Activated naive CD8-positive, alpha-beta T cell treated with anti-CD3 and anti-CD28 coated beads, Interleukin-2, amount 10 ng/mL, durations not matched to agents 7 days and 5 days (primary cell): ENCODE measurements at regions of chr2 and their contacts with region 1.

Region 1: DNA sequence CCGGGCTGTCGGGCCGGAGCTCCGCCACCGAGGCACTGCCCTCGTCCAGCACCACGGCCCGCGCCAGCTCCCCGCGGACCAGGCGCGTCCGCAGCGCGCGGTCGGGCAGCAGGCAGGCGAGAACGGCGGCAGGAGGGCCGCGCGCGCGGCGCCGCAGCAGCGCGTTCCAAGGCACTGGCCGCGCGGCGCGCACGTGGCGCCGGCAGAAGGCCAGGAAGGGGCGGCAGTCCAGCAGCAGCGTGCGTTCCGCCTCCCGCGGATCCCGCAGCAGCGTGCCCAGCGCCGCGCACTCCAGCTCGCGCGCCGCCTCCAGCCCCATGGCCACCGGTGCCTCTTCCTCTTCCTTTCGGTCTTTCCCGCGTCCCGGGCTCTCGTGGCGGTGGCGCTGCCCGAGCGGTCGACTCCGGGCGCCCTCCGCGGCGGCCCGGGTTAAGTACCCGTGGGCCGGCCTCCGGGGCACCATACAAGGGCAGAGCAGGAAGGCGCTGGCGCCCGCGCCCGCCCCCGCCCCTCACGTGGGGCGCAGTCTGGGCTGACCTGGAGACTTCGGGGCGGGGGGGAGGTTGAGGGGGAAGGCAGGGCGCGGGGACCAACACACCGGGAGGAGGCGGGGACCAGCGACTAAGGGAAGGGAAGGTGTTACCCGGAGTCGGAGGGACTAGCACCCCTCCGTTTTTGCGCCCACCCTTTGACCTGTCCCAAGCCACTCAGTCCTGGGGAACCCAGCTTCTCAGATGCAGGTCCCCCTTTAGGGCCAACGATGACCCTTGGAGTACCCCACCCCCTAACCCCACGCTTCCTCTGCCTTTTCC is at the start of gene DUSP2:
- DNase-seq: peak; percentile 89
- ATAC-seq: peak; percentile 68
- H3K4me3 Mint-ChIP-seq: peak within 1 kb of the TSS; percentile 93
- H3K27ac Mint-ChIP-seq: peak within 1 kb of the TSS; percentile 96
- H3K4me1 Mint-ChIP-seq: peaks cover 46% of the 10 kb centered on the region
- H3K27me3 Mint-ChIP-seq: no peaks in the 10 kb centered on the region
- total RNA-seq, gene DUSP2: 47.7 to 50.2 TPM

Region 2: GRCh38 chr2:96072746-96073145 is 72.5 kb before region 1 on chr2:
- POLR2A ChIA-PET with region 1: no interaction called
- DNase-seq: no peak
- ATAC-seq: no peak
- H3K4me3 Mint-ChIP-seq: no peak overlapping the region
- H3K27ac Mint-ChIP-seq: no peak overlapping the region
- H3K4me1 Mint-ChIP-seq: no peaks in the 10 kb centered on the region
- H3K27me3 Mint-ChIP-seq: peaks cover 7% of the 10 kb centered on the region

Region 3: DNA sequence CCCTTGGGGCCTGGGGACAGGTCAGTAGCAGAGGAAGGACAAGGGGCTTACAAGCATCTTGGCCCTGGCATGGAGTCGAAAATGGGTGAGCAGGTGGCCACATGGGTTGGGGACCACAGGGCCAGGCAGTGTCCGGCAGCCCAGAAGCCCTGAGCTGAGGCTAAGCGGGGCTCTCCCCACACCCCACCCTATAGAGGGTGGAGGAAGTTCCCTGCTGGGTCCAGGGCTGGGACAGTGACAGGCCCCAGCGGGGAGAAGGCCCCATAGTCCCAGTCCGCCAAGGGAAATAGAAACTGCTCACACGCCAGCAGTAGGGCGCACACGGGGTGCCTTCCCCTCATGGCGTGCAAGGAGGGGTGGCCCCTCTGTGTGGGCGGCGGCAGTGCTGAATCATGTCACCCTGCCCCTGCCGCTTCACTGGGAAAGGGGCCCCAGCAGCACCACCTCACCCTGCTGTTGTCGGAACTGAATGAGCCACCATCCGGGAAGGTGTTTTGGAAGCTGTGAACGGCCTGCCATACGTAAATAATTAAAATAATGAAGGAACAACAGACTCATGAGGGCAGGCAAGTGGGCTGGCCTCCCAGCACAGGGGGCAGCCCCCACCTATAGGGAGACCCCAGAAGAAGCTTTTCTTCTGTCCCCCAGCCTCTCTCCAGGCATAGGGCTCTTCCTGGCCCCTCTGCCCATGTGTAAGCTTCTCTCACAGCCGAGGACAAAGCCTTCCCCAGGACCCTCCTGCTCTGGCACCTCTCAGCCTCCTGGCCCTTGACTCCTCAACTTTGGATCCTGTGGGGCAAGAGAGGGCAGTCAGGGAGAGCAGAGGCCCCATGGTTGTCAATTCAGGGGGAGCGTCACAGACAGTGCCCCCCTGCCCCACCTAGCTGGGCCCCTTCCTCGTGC is 12.7 kb after region 1 on chr2:
- POLR2A ChIA-PET with region 1: interaction called, 89 read pairs
- DNase-seq: peak; percentile 71
- ATAC-seq: peak; percentile 79
- H3K4me3 Mint-ChIP-seq: peak overlapping the region; percentile 59
- H3K27ac Mint-ChIP-seq: peak overlapping the region; percentile 80
- H3K4me1 Mint-ChIP-seq: peaks cover 57% of the 10 kb centered on the region
- H3K27me3 Mint-ChIP-seq: peaks cover 6% of the 10 kb centered on the region

Region 4: GRCh38 chr2:96164459-96165184 is 19.4 kb after region 1 on chr2:
- POLR2A ChIA-PET with region 1: interaction called, 89 read pairs
- DNase-seq: peak; percentile 74
- ATAC-seq: peak; percentile 86
- H3K4me3 Mint-ChIP-seq: peak overlapping the region; percentile 80
- H3K27ac Mint-ChIP-seq: peak overlapping the region; percentile 99
- H3K4me1 Mint-ChIP-seq: peaks cover 36% of the 10 kb centered on the region
- H3K27me3 Mint-ChIP-seq: no peaks in the 10 kb centered on the region

Region 5: DNA sequence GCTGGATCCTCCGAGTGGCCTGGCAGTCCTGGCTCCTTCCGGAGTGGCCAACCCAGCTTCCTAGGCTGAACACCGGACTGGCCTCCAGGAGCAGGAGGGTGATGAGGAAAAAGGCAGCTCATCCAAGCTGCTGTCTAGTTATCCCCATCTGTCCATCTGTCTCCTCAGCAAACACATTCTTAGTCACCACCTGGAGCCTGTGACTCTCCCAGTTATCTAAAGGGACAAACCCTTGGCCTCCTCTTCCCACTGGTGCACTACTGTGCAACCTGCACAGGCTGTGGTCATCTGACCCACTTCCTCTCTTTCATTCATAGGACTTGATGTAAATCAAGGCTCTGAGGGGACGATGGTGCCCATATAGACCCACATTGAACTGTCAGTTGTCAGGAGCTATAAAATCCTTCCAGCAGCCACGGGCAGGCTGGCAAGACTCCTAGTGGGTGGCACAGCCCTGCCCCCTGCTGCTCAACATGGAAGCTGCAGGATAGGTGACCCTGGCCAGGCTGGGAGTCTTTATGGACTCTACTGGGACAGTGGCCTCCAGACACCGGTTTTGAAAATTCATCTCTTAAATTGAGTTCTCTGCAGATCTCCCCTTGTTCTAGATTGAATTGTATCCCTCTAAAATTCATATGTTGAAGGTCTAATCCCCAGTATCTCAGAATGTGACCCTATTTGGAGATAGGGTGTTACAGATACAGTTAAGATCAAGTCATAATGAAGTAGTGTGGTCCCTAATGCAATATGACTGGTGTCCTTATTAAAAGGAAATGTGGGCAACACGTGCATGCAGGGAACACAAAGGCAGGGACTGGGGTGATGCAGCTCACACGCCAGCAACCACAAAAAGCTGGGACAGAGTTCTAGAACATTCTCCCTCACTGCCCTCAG is 29.3 kb after region 1 on chr2:
- POLR2A ChIA-PET with region 1: interaction called, 63 read pairs
- DNase-seq: peak; percentile 85
- ATAC-seq: peak; percentile 95
- H3K4me3 Mint-ChIP-seq: no peak overlapping the region
- H3K27ac Mint-ChIP-seq: peak overlapping the region; percentile 18
- H3K4me1 Mint-ChIP-seq: peaks cover 7% of the 10 kb centered on the region
- H3K27me3 Mint-ChIP-seq: no peaks in the 10 kb centered on the region